ENCODE measurements at regions of chr1 and their contacts with region 1.

Region 1: GRCh38 chr1:111619635-111620440 is at the start of gene RAP1A:
- DNase-seq: peak; percentile 96
- ATAC-seq: peak; percentile 78
- H3K4me3 Mint-ChIP-seq: peak within 1 kb of the TSS; percentile 94
- H3K27ac Mint-ChIP-seq: peak within 1 kb of the TSS; percentile 92
- H3K4me1 Mint-ChIP-seq: peaks cover 68% of the 10 kb centered on the region
- H3K27me3 Mint-ChIP-seq: no peaks in the 10 kb centered on the region
- total RNA-seq, gene RAP1A: 161 to 224 TPM

Region 2: DNA sequence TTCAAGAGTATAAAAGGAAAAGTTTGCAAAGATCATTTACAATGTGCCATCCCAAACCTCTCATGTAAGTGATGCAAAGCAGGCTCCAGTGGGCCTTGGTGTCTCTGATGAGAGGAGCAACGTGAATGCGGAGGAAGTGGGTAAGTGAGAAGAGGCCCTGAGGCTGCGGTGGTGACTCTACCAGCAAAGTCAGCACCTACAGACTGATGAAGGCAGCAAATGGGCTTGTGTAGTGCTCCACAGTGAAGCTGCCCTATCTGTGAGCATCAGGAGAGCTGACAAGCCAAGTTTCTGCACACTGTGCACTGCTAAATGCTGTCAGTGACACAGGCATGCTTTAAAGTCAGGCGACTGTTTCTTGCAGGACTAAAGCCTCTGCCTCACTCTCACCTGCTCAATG is 15.9 kb before region 1 on chr1:
- CTCF ChIA-PET with region 1: interaction called, 102 read pairs
- DNase-seq: peak; percentile 95
- ATAC-seq: peak; percentile 90
- H3K4me3 Mint-ChIP-seq: peak overlapping the region; percentile 56
- H3K27ac Mint-ChIP-seq: peak overlapping the region; percentile 96
- H3K4me1 Mint-ChIP-seq: peaks cover 77% of the 10 kb centered on the region
- H3K27me3 Mint-ChIP-seq: no peaks in the 10 kb centered on the region